Psoas muscle (tissue), 8 donors: ENCODE measurements at regions of chr3 and their contacts with region 1.

Region 1: GRCh38 chr3:48918388-48919214 is at the start of gene ARIH2:
- DNase-seq: peak; percentile 95 to 97
- ATAC-seq: peak; percentile 94 to 97 (median 96)
- H3K4me3 ChIP-seq: peak within 1 kb of the TSS; percentile 86
- H3K27ac ChIP-seq: peak within 1 kb of the TSS; percentile 96
- H3K4me1 ChIP-seq: peaks cover 19% of the 10 kb centered on the region
- H3K27me3 ChIP-seq: no peaks in the 10 kb centered on the region
- CTCF ChIP-seq: peak; percentile 15
- total RNA-seq, gene ARIH2: 92.7 to 125 (median 113) TPM

Region 2: DNA sequence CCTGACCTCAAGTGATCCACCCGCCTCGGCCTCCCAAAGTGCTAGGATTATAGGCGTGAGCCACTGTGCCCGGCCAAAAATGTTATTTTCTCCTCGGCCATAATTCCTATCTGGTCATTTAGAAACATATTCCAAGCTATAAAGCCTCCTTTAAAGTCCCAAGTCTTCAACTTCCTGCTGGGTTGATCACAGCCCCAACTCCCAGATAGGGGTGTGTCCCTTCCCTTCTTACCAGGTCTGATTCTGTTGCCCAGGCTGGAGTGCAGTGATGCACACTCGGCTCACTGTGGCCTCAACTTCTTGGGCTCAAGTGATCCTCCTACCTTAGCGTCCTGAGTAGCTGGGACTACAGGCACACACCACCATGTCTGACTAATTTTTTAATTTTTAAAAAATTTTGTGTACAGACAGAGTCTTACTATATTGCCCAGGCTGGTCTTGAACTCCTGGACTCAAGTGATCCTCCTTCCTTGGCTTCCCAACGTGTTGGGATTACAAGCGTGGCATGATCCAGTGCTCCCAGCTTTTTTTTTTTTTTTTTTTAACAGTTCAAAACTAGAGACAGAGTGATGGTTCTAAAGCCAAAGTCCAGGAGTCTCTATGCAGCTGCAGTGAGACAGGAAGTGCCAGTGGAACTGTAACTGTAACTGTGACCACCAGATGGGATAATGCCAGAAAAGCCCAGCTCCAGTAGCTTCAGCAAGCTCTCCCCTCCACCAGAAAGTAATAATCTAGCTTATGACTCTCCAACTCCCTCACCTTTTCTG is 62.7 kb before region 1 on chr3:
- intact Hi-C with region 1: loop called in 1 of 2 experiments (anchors 5 kb)
- DNase-seq: peak in 1 of 2 donors; percentile 14
- ATAC-seq: no peak
- H3K4me3 ChIP-seq: no peak overlapping the region
- H3K27ac ChIP-seq: peak overlapping the region; percentile 30
- H3K4me1 ChIP-seq: peaks cover 45% of the 10 kb centered on the region
- H3K27me3 ChIP-seq: no peaks in the 10 kb centered on the region
- CTCF ChIP-seq: no peak